ENCODE measurements at regions of chr2 and their contacts with region 1.

Region 1: DNA sequence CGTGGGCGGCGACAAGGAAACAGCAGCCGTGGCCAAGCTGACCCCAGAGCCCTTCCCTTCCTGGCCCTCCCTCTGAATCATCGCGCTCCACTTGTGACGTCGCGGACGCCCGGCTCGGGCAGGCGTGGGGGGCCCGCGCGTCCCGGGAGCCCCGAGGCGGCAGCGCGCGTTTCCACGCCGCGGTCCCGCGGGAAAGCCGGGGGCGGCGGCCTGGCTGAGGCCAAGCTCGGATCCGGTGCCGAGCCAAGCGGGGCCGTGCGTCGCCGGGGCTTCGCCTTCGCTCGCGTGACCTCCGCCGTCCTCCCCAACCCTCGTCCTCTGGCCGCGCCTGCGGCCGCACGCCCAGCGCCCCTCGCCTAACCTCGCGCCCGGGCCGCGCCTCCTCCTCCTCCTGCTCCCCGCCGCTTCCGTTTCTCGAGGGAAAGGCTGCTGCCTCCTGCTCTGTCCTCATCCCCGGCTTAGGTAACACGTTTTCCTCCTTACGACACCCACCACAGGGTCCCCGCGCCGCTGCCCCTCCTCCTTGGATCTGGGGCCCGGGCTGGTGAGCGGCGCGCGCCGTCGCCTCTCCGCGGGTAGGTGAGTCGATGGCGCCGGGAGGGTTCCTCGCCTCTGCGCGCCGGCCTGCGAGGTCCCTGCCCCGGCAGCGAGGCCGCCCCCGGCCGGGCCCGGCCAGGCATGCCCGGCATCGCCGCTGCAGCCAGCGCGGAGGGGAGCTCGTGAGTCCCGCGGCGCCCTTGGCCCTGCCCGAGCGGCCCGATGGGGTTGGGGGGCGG is at the start of gene INPP1:
- DNase-seq: peak in 1 of 2 experiments; percentile 45
- H3K4me3 ChIP-seq: peak within 1 kb of the TSS; percentile 75
- H3K27ac ChIP-seq: no peak within 1 kb of the TSS
- H3K4me1 ChIP-seq: peaks cover 12% of the 10 kb centered on the region
- H3K27me3 ChIP-seq: no peaks in the 10 kb centered on the region
- CTCF ChIP-seq: no peak
- total RNA-seq, gene INPP1: 7.1 and 9.5 TPM in 2 replicates

Region 2: GRCh38 chr2:190319555-190320498 is 23.9 kb before region 1 on chr2 and contains the start of gene HIBCH:
- CTCF ChIA-PET with region 1: interaction called, 5 read pairs
- POLR2A ChIA-PET with region 1: no interaction called
- intact Hi-C with region 1: loop called (anchors 1 kb)
- DNase-seq: peak; percentile 94 to 95
- H3K4me3 ChIP-seq: peak within 1 kb of the TSS; percentile 85
- H3K27ac ChIP-seq: peak within 1 kb of the TSS; percentile 55
- H3K4me1 ChIP-seq: peaks cover 9% of the 10 kb centered on the region
- H3K27me3 ChIP-seq: no peaks in the 10 kb centered on the region
- CTCF ChIP-seq: peak; percentile 57
- total RNA-seq, gene HIBCH: 14.7 and 17.4 TPM in 2 replicates